ENCODE measurements at regions of chr10 and their contacts with region 1.

Region 1: DNA sequence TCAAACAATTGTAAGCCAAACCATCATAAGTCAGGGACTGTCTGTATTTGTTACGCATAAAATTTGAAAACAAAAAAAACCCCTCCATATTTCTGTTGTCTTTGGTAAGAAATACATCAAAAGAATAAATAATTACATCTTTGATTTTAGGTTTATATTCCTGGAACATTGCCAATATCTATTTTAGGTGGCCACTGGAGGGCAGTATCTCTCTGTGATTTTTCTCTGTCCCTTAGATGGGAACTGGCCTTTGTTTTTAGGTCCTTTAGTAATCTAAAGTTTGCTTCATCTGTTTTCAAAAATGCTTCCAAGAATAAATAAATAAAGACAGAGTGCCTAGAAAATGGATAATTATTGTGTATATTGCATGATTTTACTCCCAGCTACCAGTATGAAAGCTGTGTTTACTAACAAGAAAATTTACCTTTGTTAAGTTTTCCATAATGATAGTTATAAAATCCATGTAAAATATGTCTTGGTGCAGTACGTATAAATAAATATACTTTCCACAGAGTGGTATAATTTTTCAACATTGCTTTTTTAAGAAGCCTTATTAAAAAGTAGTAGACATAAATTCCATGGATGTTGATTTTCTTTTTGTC is 64.2 kb downstream of the PHYHIPL start:
- DNase-seq: no peak
- ATAC-seq: no peak
- H3K4me3 ChIP-seq: no peak overlapping the region
- H3K27ac ChIP-seq: no peak overlapping the region
- H3K4me1 ChIP-seq: no peaks in the 10 kb centered on the region
- H3K27me3 ChIP-seq: no peaks in the 10 kb centered on the region

Region 2: DNA sequence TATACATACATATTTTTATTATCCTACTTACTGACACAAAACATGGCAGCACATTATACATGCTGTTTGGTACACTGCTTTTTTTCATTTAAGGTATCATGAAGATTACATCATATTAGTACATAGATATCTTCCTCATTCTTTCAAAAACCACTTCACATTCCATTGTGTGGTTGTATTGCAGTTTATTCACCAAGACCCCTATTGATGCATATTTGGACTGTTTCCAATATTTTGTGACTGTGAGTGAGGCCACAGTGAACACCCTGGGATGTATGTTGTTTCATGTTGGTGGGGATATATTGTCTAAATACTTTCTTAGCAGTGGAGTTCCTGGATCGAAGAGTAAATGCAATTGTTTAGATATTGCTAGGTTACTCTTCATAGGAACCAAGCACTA is 816.5 kb before region 1 on chr10:
- intact Hi-C with region 1: no loop called
- DNase-seq: no peak
- ATAC-seq: no peak
- H3K4me3 ChIP-seq: no peak overlapping the region
- H3K27ac ChIP-seq: no peak overlapping the region
- H3K4me1 ChIP-seq: no peaks in the 10 kb centered on the region
- H3K27me3 ChIP-seq: no peaks in the 10 kb centered on the region

Region 3: GRCh38 chr10:58775960-58776567 is 464.6 kb before region 1 on chr10:
- intact Hi-C with region 1: no loop called
- DNase-seq: peak in 2 of 3 donors; percentile 18 to 43
- ATAC-seq: peak; percentile 94 to 95
- H3K4me3 ChIP-seq: no peak overlapping the region
- H3K27ac ChIP-seq: peak overlapping the region; percentile 12
- H3K4me1 ChIP-seq: peaks cover 4% of the 10 kb centered on the region
- H3K27me3 ChIP-seq: no peaks in the 10 kb centered on the region

Region 4: GRCh38 chr10:59027975-59028655 is 212.6 kb before region 1 on chr10:
- intact Hi-C with region 1: no loop called
- DNase-seq: no peak
- ATAC-seq: no peak
- H3K4me3 ChIP-seq: no peak overlapping the region
- H3K27ac ChIP-seq: no peak overlapping the region
- H3K4me1 ChIP-seq: no peaks in the 10 kb centered on the region
- H3K27me3 ChIP-seq: no peaks in the 10 kb centered on the region

Region 5: DNA sequence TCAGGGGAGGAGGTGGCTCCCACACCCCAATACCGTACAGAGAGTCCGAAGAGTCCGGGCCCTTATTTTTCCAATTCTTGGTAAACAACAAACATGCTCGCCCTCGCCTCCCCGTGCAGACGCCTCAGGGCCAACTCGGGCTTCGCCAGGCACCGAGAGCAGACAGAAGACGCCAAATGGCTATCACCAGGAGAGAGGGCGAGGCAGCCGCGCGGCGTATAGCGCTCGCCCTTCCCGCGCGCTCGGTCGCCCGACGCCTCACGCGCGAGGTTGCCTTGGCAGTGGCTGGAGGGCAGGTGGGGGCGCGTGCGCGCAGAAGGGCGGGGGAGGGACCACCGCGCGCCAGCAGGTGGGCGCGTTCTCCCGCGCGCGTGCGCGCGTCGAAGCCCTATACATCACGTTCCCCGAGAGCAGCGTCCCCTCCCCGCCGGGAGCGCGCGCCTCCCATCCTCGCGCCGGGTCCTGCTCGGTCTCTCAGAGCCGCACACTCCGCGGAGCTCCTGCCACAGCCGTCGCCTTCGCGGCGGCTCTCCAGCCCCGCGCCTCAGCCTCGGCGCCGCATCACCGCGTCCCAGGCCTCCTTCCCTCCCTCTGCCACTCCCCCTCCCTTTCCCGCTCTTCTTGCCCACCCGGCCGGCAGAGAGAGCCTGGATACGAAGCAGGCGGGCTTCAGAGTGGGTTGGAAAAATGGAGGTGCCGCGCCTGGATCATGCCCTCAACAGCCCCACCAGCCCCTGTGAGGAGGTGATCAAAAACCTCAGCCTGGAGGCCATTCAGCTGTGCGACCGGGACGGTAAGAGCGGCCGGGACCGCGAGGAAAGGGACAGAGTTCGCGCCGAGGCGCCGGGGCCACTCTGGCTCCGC is 64.3 kb before region 1 on chr10 and contains the start of gene PHYHIPL:
- intact Hi-C with region 1: no loop called
- DNase-seq: peak in 2 of 3 donors; percentile 33 to 47
- ATAC-seq: peak; percentile 51 to 57
- H3K4me3 ChIP-seq: peak within 1 kb of the TSS; percentile 34
- H3K27ac ChIP-seq: no peak within 1 kb of the TSS
- H3K4me1 ChIP-seq: peaks cover 3% of the 10 kb centered on the region
- H3K27me3 ChIP-seq: peaks cover 2% of the 10 kb centered on the region
- total RNA-seq, gene PHYHIPL: 0.11 to 0.29 (median 0.25) TPM in 3 of 4 donors, not detected in the other

Region 6: DNA sequence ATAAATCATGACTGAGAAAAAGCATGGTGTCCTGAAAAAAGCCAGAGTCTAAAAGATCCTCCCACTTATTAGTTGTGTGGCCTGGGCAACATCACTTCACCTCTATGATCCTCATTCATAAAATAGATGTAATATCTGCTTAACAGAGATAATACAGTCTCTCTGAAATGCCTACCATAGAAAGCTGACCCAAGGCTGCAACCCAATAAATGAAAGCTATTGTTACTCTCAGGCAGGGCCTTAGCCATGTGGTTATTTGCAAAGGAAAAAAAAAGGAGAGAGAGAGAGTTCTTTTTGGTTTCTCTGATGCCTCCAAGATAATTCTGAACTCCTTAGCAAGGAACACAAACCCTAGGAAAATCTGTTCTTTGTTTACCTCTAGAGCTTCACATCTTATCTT is 113.8 kb after region 1 on chr10:
- intact Hi-C with region 1: loop called in 1 of 4 experiments (anchors 10 kb)
- DNase-seq: no peak
- ATAC-seq: no peak
- H3K4me3 ChIP-seq: no peak overlapping the region
- H3K27ac ChIP-seq: no peak overlapping the region
- H3K4me1 ChIP-seq: peaks cover 3% of the 10 kb centered on the region
- H3K27me3 ChIP-seq: no peaks in the 10 kb centered on the region

Region 7: GRCh38 chr10:59580026-59580863 is 339.6 kb after region 1 on chr10:
- intact Hi-C with region 1: loop called (anchors 5 to 10 kb)
- DNase-seq: no peak
- ATAC-seq: peak; percentile 26 to 53
- H3K4me3 ChIP-seq: no peak overlapping the region
- H3K27ac ChIP-seq: no peak overlapping the region
- H3K4me1 ChIP-seq: no peaks in the 10 kb centered on the region
- H3K27me3 ChIP-seq: no peaks in the 10 kb centered on the region